Activated CD4-positive, alpha-beta T cell treated with anti-CD3 and anti-CD28 coated beads for 36 hours (primary cell): ENCODE measurements at regions of chr6 and their contacts with region 1.

Region 1: DNA sequence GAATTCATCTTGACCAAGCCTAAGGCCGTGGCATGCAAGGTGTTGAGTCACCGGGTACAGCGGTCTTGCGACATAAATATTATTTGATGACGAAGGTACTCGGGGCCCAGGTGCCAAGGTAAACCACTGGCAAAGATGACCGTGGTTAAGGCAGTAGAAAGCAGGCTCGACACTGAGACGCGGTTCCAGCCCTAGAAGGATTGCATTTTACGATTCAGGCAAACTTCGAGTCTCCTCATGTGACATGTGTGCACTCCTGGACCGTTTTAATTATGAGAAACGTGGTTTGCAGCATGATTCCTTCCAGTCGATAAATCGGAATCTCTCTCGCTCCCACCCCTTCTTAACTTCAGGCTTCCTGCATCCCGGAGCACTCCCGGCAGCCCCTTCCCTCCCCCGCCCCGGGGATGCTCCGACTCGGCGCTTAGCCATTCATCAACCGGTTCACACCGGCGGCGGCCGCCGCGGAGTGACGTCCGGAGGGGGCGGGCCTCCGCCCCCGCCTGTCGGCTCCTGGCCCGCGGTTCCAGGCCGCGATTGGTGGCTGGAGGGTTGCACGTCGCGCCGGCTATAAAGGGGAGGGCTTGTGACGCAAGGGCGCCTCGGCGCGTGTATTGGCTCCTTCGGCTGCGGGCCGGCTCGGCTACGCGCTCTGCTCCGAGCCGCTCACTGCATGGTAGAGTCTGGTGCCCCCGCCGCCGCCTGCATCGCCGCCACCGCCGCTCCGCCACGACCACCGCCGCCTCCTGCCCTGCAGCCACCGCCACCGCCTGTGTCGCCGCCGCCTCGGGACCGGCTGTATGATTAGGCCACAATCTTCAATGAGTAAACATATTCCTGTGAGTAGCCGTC is at the starts of genes LOC128125822 and PTP4A1:
- DNase-seq: peak; percentile 98
- ATAC-seq: peak; percentile 93
- H3K4me3 Mint-ChIP-seq: peak within 1 kb of the TSS; percentile 95
- H3K27ac Mint-ChIP-seq: peak within 1 kb of the TSS; percentile 98
- H3K4me1 Mint-ChIP-seq: peaks cover 29% of the 10 kb centered on the region
- H3K27me3 Mint-ChIP-seq: no peaks in the 10 kb centered on the region
- total RNA-seq, gene PTP4A1: 42.6 to 51.9 TPM

Region 2: GRCh38 chr6:63352587-63353285 is 219.4 kb before region 1 on chr6:
- CTCF ChIA-PET with region 1: no interaction called
- POLR2A ChIA-PET with region 1: no interaction called
- intact Hi-C with region 1: loop called in 1 of 2 experiments (anchors 1 kb)
- DNase-seq: no peak
- ATAC-seq: no peak
- H3K4me3 Mint-ChIP-seq: no peak overlapping the region
- H3K27ac Mint-ChIP-seq: no peak overlapping the region
- H3K4me1 Mint-ChIP-seq: peaks cover 6% of the 10 kb centered on the region
- H3K27me3 Mint-ChIP-seq: peaks cover 13% of the 10 kb centered on the region

Region 3: GRCh38 chr6:63492476-63492875 is 79.6 kb before region 1 on chr6:
- CTCF ChIA-PET with region 1: no interaction called
- POLR2A ChIA-PET with region 1: no interaction called
- intact Hi-C with region 1: no loop called
- DNase-seq: no peak
- ATAC-seq: no peak
- H3K4me3 Mint-ChIP-seq: no peak overlapping the region
- H3K27ac Mint-ChIP-seq: no peak overlapping the region
- H3K4me1 Mint-ChIP-seq: no peaks in the 10 kb centered on the region
- H3K27me3 Mint-ChIP-seq: peaks cover 2% of the 10 kb centered on the region

Region 4: GRCh38 chr6:63936399-63936798 is 364.3 kb after region 1 on chr6:
- CTCF ChIA-PET with region 1: no interaction called
- POLR2A ChIA-PET with region 1: no interaction called
- intact Hi-C with region 1: no loop called
- DNase-seq: no peak
- ATAC-seq: no peak
- H3K4me3 Mint-ChIP-seq: no peak overlapping the region
- H3K27ac Mint-ChIP-seq: no peak overlapping the region
- H3K4me1 Mint-ChIP-seq: no peaks in the 10 kb centered on the region
- H3K27me3 Mint-ChIP-seq: no peaks in the 10 kb centered on the region